Posterior cingulate gyrus (tissue), 11 donors: ENCODE measurements at regions of chr5 and their contacts with region 1.

Region 1: DNA sequence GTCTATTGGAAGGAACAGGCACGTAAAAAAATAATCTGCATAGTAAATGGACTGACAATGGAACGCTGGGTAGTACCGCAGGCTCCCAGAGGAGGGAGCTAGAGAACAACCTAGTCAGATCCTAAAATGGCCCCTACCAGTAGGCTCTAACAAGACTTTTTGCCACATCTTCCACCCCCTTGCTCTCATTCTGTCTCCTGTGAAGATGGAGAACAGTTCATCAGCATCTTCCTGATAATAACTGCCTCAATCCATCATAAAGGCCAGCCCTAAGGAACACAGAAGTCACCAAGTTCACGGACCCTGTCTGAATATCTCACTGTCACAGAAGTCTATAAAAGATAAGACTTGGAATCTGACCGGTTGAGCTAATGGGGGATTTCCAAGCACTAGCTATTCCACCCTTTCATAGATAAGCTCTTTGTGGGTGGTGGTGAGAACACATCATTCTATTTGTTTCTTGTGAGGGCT is 133.4 kb downstream of the SLC1A3 start:
- DNase-seq: peak in 6 of 10 donors; percentile 43 to 87 (median 52)

Region 2: DNA sequence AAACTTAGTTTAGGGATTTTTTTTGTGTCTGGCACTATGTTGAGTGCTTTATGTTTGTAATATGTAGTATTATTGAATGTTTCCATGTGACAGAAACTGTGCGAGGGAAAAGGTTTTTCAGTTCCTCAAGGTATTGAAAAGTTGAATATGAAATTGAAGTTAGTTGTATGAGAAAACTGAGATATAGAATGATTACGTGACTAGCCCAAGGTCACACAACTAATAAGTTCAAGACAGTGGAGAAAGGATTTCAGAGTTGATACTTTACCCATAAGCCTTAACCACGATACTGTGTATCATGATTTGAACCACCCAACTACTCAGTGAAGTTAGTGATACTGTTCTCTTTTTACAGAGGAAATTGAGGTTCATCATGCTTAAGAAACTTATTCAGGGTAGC is 142.5 kb after region 1 on chr5:
- intact Hi-C with region 1: no loop called
- DNase-seq: no peak

Region 3: DNA sequence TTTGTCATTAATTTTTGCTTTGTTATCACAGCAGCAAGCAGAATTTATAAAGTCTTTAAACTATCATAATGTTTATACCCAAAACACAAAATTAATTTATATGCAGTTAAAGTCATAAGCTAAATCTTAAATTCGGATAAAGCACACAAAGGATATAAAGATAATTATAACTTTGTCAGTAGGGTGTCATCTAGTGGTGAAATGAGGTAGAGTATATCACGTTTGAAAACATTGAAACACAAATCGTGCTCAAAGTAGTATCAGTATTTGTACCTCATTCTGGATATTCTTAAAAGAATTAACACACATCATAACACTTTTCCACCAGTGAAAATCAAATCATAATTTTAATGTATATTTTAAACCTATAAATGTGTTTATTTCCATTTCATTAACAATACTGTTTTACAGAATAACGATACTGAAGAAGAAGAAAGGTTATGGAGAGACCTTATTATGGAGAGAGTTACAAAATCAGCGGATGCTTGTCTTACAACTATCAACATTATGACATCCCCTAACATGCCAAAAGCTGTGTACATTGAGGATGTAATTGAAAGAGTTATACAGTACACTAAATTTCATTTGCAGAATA is 266.3 kb after region 1 on chr5:
- intact Hi-C with region 1: loop called (anchors 5 kb)
- DNase-seq: no peak